Left ventricle myocardium superior (tissue), 1 donor: ENCODE measurements at regions of chr7 and their contacts with region 1.

Region 1: DNA sequence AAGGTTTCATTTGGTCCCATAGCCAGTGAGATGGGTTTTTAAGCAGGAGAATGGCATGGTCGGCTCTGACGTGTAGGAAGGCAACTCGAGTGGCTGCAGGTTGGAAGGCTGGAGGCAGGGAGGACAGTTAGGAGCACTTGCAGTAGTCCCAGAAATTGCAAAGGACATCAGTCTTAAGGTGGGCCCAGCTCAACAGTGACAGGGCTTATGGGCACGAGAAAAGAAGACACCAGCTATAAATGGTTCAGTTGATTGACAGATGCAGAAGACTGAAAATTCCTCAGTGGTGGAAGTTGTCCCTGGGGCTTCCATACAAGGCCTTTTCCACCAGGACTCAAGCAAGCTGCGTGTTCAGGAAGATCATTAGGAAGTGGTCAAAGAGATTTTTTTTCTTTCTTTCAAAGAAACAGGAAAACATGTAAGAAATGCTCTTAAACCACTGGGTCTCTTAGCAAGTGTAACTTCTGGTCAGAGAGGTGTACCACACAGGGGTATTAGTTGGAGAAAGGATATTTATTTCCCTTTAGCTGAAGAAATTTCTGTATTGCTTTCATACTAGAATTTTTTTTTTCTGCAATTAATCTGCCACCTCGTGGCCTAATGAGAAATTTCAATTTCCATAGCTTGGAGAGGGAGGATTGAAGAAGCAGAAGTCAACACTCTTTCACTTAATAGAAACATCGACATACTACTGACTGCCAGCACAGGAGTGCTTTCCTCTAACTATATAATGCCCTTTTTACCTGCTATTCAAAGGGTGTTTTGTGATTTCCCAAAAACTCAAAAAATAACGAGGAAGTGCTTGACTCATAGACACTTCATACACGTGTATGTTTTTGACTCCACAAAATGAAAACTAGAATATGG is 177.4 kb upstream of the NAMPT start:
- DNase-seq: no peak
- ATAC-seq: peak; percentile 37

Region 2: DNA sequence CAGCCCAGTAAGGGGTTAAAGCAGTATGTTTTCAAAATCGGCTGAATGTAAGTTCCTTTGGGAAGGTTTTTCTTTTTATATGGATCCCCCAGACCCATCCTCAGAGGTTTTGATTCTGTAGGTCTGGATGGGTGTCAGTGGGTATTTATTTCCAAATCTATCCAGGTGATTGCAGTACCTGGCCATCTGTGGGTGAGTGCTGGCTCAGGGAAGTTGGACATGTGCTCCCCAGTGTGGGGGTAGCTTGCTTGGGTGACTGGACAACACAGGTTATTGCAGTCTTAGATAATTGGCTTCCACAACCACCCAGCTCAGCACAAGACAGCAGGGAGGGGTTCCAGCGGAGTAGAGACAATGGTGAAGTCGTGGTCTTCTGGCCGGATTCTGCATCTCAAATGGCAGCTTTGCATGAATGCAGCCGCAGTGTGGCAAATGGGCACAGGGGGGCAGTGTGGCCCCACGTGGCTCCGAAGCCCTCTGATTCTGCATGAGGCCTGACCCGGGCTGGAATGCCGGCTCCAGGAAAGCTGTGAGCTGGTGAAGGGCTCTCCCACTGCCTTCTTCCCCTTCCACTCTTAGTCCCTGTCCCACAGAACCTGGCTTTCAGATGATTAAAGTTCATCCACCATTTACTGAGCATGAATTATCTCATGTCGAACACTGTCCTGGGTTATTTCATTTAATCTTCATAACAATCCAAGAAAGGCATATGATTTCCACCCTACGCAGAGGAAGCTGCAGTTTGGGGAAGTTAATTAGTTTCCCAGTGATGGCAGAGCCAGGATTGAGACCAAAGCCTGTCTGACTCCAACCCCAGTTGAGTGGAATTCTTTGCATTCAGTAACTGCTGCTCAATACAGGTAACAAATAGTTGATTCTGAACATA is 285.6 kb before region 1 on chr7:
- intact Hi-C with region 1: loop called (anchors 1 kb)
- DNase-seq: peak; percentile 91
- ATAC-seq: peak; percentile 88

Region 3: DNA sequence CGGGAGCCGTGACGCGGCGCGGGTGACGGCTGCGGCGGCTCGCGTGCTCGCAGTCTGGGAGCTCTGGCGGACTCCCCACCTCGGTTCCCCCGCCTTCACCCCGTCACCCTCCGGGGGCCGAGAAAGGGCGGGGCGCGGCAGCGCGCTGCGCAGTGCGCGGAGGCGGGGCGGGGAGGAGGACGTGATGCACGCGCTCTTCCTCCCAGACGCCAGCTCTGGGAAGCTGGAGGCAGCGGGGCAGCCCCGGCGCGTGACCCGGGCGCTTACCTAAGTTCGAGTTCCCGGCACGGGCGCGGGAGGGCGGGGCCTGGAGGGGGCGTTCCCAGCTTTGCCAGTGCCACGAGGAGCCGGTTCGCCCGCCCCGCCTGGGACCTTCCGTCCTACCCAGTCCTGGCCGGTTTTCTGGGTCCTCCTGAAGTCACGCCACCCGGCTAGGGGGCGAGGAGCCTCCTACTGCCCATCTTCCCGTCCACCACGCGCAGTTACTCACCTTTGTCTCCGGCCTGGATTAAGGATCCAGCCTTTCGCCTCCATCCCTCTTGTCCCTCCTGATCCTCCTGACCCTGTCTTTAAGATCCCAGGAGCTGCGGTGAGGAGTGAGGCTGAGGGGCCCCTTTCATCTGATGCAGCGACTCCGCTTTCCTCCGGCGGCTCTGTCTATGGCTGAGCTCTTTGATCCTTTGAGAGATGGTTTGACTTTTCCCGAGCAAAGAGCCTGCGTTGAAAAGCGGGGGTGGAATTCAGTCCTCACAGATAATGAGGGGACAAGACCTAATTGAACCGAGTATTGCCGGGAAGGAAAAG is 177.0 kb before region 1 on chr7:
- intact Hi-C with region 1: loop called (anchors 10 kb)
- DNase-seq: peak; percentile 99
- ATAC-seq: peak; percentile 96